ENCODE measurements at regions of chr4 and their contacts with region 1.

Region 1: GRCh38 chr4:6909073-6909965 is at the start of gene TBC1D14:
- DNase-seq: peak; percentile 72 to 94 (median 84)
- ATAC-seq: peak; percentile 85
- H3K4me3 ChIP-seq: peak within 1 kb of the TSS; percentile 78 to 80
- H3K4me3 Mint-ChIP-seq: peak within 1 kb of the TSS; percentile 92
- H3K27ac ChIP-seq: peak within 1 kb of the TSS; percentile 81 to 98
- H3K27ac Mint-ChIP-seq: peak within 1 kb of the TSS; percentile 91
- H3K4me1 ChIP-seq: peaks cover 37% of the 10 kb centered on the region
- H3K4me1 Mint-ChIP-seq: peaks cover 53% of the 10 kb centered on the region
- H3K27me3 ChIP-seq: no peaks in the 10 kb centered on the region
- H3K27me3 Mint-ChIP-seq: no peaks in the 10 kb centered on the region
- CTCF ChIP-seq: no peak
- total RNA-seq, gene TBC1D14: 29.2 to 30.9 TPM

Region 2: GRCh38 chr4:6716018-6716911 is 193.1 kb before region 1 on chr4 and contains the start of gene BLOC1S4:
- CTCF ChIA-PET with region 1: interaction called, 3 read pairs
- POLR2A ChIA-PET with region 1: interaction called, 8 read pairs
- intact Hi-C with region 1: loop called (anchors 1 kb)
- DNase-seq: peak; percentile 77 to 98 (median 88)
- ATAC-seq: peak; percentile 83
- H3K4me3 ChIP-seq: peak within 1 kb of the TSS; percentile 74 to 81
- H3K4me3 Mint-ChIP-seq: peak within 1 kb of the TSS; percentile 95
- H3K27ac ChIP-seq: peak within 1 kb of the TSS; percentile 75 to 80
- H3K27ac Mint-ChIP-seq: peak within 1 kb of the TSS; percentile 97
- H3K4me1 ChIP-seq: peaks cover 25% of the 10 kb centered on the region
- H3K4me1 Mint-ChIP-seq: peaks cover 48% of the 10 kb centered on the region
- H3K27me3 ChIP-seq: no peaks in the 10 kb centered on the region
- H3K27me3 Mint-ChIP-seq: no peaks in the 10 kb centered on the region
- CTCF ChIP-seq: peak; percentile 18
- total RNA-seq, gene BLOC1S4: 29.7 to 30.7 TPM

Region 3: DNA sequence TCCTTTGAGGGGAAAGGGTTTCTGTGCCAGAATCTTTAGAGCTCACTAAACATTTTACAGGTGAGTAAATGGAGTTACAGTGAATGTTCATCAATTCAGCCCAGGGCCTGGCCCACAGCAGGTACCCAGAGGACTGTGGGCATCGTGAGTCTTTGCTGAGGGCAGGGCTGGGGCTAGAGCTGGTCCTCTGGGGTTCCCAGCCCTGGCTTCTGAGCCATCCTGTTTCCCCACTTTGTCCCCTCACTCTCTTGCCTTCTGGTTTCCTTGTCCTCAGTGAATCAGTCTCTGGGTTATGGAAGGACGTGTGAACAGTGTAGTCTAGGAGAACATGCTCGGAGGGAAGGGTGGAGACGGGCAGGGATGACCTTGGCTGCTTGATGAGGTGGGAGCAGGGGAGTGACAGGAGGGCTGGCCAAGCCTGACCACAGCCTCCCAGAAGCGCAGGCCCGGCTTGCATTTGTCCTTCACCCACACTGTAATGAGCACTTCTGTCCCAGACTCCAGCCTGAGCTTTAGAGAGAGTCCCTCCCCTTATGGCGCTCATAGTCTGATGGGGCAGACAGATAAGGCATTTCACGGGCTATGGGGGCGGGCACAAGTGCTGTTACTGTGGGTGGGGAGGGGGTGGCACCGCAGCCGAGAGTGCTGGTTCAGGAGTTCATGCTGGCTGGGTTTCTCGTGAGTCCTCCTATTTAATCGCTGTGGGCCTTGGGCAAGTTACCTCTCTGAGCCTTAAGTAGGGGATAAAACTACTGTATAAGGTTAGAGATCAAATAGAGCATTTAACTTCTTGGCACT is 17.6 kb after region 1 on chr4:
- CTCF ChIA-PET with region 1: interaction called, 6 read pairs
- POLR2A ChIA-PET with region 1: interaction called, 7 read pairs
- intact Hi-C with region 1: loop called (anchors 1 to 2 kb)
- DNase-seq: peak; percentile 37 to 77 (median 65)
- ATAC-seq: peak; percentile 96
- H3K4me3 ChIP-seq: peak overlapping the region in 1 of 2 experiments; percentile 36
- H3K4me3 Mint-ChIP-seq: peak overlapping the region; percentile 75
- H3K27ac ChIP-seq: peak overlapping the region in 1 of 2 experiments; percentile 52
- H3K27ac Mint-ChIP-seq: peak overlapping the region; percentile 92
- H3K4me1 ChIP-seq: peaks cover 48% of the 10 kb centered on the region
- H3K4me1 Mint-ChIP-seq: peaks cover 84% of the 10 kb centered on the region
- H3K27me3 ChIP-seq: no peaks in the 10 kb centered on the region
- H3K27me3 Mint-ChIP-seq: no peaks in the 10 kb centered on the region
- CTCF ChIP-seq: no peak

Region 4: DNA sequence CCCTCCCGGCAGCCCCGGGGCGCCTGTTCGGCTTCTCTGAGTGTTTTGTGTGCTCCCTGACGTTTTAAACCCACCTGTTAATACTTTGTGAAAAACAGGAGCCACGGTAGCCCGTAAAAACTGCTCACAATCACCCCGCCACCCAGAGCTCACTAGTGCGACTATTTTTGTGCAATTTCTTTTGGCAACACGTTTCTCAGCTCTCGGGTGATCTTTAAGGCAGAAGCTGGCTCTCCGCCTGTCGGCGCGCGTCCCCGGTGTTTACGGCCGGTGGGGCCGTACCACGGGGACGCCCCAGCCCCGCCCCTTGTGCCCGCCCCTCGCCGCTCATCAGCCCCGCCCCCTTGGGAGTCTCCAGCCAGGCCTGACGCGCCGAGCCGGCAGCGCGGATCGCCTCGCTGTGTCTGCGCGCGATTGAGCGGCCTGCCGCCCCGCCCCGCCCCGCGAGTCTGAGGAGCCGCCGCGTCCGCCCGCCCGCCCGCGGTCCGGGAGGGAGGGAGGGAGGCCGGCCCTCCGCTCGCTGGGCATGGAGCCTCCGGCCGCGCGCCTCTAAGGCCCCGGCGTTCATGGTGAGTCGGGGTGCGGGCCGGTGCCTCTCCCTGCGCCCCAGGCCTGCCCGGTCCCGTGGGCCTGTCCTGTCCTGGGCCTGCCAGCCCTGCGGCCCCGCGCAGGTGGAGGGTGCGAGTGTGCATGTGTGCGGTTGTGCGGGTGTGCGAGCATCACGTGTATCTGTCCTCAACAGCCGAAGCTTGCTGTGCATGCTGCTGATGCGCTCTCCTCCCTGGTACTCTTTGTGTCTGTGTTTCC is 77.7 kb after region 1 on chr4:
- CTCF ChIA-PET with region 1: interaction called, 9 read pairs
- POLR2A ChIA-PET with region 1: interaction called, 31 read pairs
- intact Hi-C with region 1: loop called (anchors 1 kb)
- DNase-seq: peak; percentile 87 to 97 (median 93)
- ATAC-seq: peak; percentile 92
- H3K4me3 ChIP-seq: peak overlapping the region; percentile 91 to 94
- H3K4me3 Mint-ChIP-seq: peak overlapping the region; percentile 94
- H3K27ac ChIP-seq: peak overlapping the region; percentile 78 to 88
- H3K27ac Mint-ChIP-seq: peak overlapping the region; percentile 98
- H3K4me1 ChIP-seq: peaks cover 55% of the 10 kb centered on the region
- H3K4me1 Mint-ChIP-seq: peaks cover 81% of the 10 kb centered on the region
- H3K27me3 ChIP-seq: no peaks in the 10 kb centered on the region
- H3K27me3 Mint-ChIP-seq: no peaks in the 10 kb centered on the region
- CTCF ChIP-seq: no peak

Measured in CD8-positive, alpha-beta T cell (primary cell).